Naive thymus-derived CD4-positive, alpha-beta T cell (primary cell): ENCODE measurements at regions of chr12 and their contacts with region 1.

Region 1: DNA sequence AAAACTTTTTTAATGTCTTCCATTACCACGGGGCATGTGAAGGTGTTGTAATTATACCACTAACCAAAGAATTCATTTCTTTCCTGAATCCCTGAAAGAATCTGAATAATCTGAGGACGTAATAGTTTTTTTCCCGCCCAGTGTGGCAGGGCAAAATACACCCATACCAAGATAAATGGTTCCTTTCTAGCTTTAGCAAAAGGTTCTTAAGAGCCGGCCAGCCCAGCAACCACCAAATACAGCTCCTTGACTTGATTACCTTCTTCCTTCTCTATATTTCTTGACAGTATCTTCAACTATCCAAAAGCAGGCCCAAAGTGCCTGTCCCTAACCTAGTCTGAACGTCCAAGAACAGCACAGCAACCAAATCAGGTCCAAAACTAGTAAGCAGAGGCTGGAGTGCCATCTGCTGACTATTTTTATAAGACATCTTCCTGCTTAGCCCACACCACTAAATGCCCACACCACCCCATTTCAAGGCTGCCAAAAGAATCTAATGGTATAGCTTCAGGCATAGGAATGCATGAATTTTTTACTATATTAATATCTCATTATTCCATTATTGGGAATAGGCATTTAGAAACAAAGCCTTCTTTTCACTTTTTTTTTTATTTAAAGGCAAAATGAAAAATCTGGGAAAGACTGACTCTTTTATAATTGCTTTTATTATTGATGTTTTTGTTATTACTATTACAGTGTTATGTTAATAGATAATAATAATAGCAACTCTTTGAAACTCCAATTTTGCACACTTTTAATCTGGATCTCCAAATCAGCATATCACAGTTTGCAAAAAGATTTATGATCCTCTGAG is 524.4 kb downstream of the MED13L start:
- DNase-seq: no peak
- ATAC-seq: no peak
- H3K4me3 ChIP-seq: no peak overlapping the region
- H3K4me3 Mint-ChIP-seq: no peak overlapping the region
- H3K27ac ChIP-seq: no peak overlapping the region
- H3K27ac Mint-ChIP-seq: no peak overlapping the region
- H3K4me1 ChIP-seq: no peaks in the 10 kb centered on the region
- H3K4me1 Mint-ChIP-seq: no peaks in the 10 kb centered on the region
- H3K27me3 ChIP-seq: no peaks in the 10 kb centered on the region
- H3K27me3 Mint-ChIP-seq: peaks cover 8 to 30% (median 17%) of the 10 kb centered on the region in 5 donors

Region 2: DNA sequence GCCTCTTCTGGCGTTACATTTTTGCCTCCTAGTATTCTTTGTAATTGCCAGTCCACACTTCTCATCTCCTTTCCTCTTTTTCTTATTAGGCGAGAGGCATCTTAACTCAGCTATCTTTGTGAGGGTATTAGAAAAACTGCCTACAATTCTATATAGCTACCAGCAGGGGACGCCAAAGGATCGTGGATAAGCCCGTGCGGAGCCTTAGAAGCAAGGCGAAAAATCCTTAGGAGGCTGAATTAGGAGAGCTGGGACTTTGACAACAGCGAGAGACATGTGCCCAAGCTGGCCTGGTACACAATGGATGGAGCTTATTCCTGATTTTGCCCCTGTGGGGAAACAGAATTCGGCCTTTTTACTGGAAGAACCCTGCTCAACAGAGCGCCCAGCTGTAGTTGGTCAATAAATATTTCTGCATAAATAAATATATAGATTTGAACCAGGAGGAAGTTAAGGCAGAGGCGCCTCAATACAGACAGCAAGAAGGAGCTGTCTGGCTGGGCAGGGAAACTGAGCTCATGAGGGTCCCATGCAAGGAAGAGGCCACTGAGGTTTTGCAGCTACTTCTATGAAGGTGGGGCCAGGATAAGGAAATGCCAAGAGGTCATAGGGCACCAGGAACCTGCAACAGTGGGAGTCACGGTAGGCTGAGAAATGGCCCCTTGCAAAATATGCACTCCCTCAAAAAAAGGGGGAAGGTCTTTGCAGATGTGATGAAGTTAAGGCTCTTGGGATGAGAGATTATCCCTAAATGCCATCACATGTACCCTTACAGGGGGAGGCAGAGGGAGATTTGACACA is 1772.4 kb before region 1 on chr12:
- CTCF ChIA-PET with region 1: no interaction called
- POLR2A ChIA-PET with region 1: no interaction called
- intact Hi-C with region 1: loop called in 1 of 2 experiments (anchors 5 kb)
- DNase-seq: peak in 2 of 9 donors; percentile 18 to 38
- ATAC-seq: peak; percentile 67
- H3K4me3 ChIP-seq: no peak overlapping the region
- H3K4me3 Mint-ChIP-seq: no peak overlapping the region
- H3K27ac ChIP-seq: no peak overlapping the region
- H3K27ac Mint-ChIP-seq: no peak overlapping the region
- H3K4me1 ChIP-seq: no peaks in the 10 kb centered on the region
- H3K4me1 Mint-ChIP-seq: peaks cover 0 to 4% (median 0%) of the 10 kb centered on the region in 7 donors
- H3K27me3 ChIP-seq: peaks cover 0 to 5% of the 10 kb centered on the region in 2 donors
- H3K27me3 Mint-ChIP-seq: peaks cover 4 to 55% (median 36%) of the 10 kb centered on the region in 5 donors

Region 3: GRCh38 chr12:115611477-115611876 is 141.6 kb before region 1 on chr12:
- CTCF ChIA-PET with region 1: no interaction called
- POLR2A ChIA-PET with region 1: no interaction called
- intact Hi-C with region 1: no loop called
- DNase-seq: no peak
- ATAC-seq: no peak
- H3K4me3 ChIP-seq: no peak overlapping the region
- H3K4me3 Mint-ChIP-seq: no peak overlapping the region
- H3K27ac ChIP-seq: no peak overlapping the region
- H3K27ac Mint-ChIP-seq: no peak overlapping the region
- H3K4me1 ChIP-seq: no peaks in the 10 kb centered on the region
- H3K4me1 Mint-ChIP-seq: no peaks in the 10 kb centered on the region
- H3K27me3 ChIP-seq: no peaks in the 10 kb centered on the region
- H3K27me3 Mint-ChIP-seq: peaks cover 0 to 6% (median 0%) of the 10 kb centered on the region in 5 donors

Region 4: GRCh38 chr12:115774148-115774905 is 21.2 kb after region 1 on chr12:
- CTCF ChIA-PET with region 1: no interaction called
- POLR2A ChIA-PET with region 1: no interaction called
- intact Hi-C with region 1: no loop called
- DNase-seq: no peak
- ATAC-seq: no peak
- H3K4me3 ChIP-seq: no peak overlapping the region
- H3K4me3 Mint-ChIP-seq: no peak overlapping the region
- H3K27ac ChIP-seq: no peak overlapping the region
- H3K27ac Mint-ChIP-seq: no peak overlapping the region
- H3K4me1 ChIP-seq: no peaks in the 10 kb centered on the region
- H3K4me1 Mint-ChIP-seq: no peaks in the 10 kb centered on the region
- H3K27me3 ChIP-seq: no peaks in the 10 kb centered on the region
- H3K27me3 Mint-ChIP-seq: peaks cover 0 to 24% (median 7%) of the 10 kb centered on the region in 5 donors